ENCODE measurements at regions of chr1 and their contacts with region 1.

Region 1: DNA sequence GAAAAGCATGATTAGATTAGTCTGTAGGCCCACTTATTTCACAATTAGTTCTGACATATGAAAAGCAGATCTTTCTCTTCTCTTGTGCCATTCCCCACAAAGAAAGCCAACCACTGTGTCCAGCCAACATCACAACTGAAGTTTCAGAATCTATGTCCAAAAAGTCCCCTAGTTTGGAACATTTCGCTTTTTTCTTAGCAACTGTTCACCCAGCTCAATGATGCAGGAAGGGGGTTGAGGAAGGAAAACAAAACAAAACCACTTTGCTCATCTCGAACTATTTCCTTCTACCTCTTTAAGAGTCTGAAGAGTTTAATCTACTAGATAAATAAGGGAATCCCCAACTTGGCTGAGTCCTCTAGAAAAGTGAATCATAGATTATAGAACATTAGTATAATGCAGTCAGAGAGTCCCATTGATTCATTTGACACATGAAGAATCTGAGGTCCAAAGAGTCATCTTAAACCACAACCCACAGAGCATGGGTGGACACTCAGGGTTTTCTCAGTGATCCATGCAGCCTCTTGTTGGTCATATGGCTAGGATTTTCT is 159.3 kb upstream of the SGIP1 start:
- DNase-seq: peak; percentile 71
- H3K4me3 Mint-ChIP-seq: peak overlapping the region; percentile 64
- H3K27ac Mint-ChIP-seq: peak overlapping the region; percentile 99
- H3K4me1 Mint-ChIP-seq: peaks cover 76% of the 10 kb centered on the region
- H3K27me3 Mint-ChIP-seq: no peaks in the 10 kb centered on the region

Region 2: DNA sequence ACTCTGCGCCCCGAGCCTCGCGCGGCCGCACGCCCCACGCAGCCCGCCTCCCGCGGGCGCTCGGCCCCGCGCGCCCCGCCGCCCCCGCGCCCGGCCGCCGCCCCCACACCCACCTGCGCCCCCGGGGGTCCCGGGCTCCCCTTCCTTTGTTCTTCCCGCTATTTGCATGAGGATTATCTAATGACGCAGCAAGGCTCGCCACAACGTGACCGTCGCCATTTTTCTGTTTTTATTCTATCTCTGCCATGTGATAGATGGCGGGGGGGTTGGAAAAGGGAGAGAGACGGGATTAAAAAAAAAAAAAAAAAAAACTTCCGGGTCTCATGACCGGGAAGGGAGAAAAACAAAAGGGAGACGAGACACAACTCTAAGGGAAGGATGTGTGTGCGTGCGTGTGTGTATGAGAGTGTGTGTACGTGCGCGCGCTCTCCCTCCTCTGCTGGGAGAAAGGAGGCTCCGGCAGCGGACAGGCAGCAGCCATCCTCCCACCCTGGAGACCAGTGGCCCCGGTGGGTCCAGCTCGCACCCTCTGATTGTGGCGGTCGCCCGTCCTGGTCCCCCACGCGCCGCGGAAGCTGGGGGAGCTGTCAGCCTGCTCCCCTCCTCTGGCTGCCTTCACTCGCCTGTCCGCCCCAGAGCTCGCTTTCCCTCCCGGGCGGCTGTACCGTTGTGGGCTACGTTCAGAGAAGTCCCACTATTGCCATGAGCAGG is 1307.0 kb before region 1 on chr1:
- CTCF ChIA-PET with region 1: no interaction called
- POLR2A ChIA-PET with region 1: no interaction called
- intact Hi-C with region 1: loop called (anchors 10 kb)
- DNase-seq: peak; percentile 66
- H3K4me3 Mint-ChIP-seq: peak overlapping the region; percentile 87
- H3K27ac Mint-ChIP-seq: peak overlapping the region; percentile 93
- H3K4me1 Mint-ChIP-seq: peaks cover 53% of the 10 kb centered on the region
- H3K27me3 Mint-ChIP-seq: no peaks in the 10 kb centered on the region

Region 3: GRCh38 chr1:66253330-66253921 is 121.2 kb before region 1 on chr1:
- CTCF ChIA-PET with region 1: interaction called, 4 read pairs
- POLR2A ChIA-PET with region 1: interaction called, 11 read pairs
- intact Hi-C with region 1: loop called (anchors 1 kb)
- DNase-seq: no peak
- H3K4me3 Mint-ChIP-seq: no peak overlapping the region
- H3K27ac Mint-ChIP-seq: no peak overlapping the region
- H3K4me1 Mint-ChIP-seq: peaks cover 51% of the 10 kb centered on the region
- H3K27me3 Mint-ChIP-seq: no peaks in the 10 kb centered on the region

Region 4: DNA sequence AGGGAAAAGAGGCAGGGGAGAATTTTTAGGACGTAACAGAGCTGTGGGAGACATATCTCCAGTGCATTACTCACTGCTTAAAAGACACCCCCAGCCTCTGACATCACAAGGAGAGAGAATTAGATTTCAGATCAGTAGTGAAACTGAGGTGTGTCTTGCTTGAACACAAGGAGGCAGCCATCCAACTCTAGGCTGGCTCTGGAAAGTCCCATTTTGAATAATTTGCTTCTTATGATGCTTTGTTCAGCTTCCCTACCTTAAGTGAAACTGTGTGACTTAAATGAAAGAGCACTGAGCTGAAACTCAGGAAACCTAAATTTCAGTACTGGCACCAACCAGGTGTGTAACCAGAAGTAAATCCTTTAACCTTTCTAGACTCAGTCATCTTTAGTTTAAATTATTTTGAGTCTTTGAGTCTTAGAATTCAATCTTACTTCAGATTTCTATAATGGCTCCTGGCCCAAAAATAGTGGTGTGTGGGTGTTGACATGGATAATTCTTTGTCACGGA is 92.2 kb before region 1 on chr1:
- CTCF ChIA-PET with region 1: interaction called, 6 read pairs
- POLR2A ChIA-PET with region 1: interaction called, 13 read pairs
- intact Hi-C with region 1: loop called (anchors 1 kb)
- DNase-seq: peak; percentile 80
- H3K4me3 Mint-ChIP-seq: no peak overlapping the region
- H3K27ac Mint-ChIP-seq: peak overlapping the region; percentile 76
- H3K4me1 Mint-ChIP-seq: peaks cover 87% of the 10 kb centered on the region
- H3K27me3 Mint-ChIP-seq: no peaks in the 10 kb centered on the region

Region 5: DNA sequence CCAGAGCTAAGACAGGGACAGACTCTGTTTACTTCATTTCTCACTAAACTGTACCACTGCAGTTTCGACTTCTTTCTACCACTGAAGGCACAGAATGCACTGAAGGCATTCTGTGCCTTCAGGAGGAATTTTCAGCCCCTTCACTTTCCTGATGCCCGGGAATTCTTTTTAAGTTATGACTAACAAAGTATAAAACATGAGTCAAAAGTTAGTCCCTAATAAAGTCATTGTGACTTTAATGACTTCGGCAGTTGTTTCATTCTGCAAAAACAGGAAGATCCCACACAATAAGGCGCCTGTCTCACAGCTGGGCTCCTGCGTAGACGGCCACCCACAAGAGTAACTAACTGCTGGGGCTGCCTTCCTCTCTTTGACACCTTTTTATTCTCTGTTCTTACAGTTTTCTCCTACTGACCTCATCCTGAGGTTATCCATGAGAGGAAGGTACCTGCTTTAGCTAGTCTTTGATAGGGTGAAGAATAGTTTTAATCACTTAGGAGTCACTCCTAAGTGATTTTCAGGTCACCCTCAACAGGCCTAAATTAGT is 24.6 kb before region 1 on chr1:
- CTCF ChIA-PET with region 1: interaction called, 11 read pairs
- POLR2A ChIA-PET with region 1: interaction called, 28 read pairs
- intact Hi-C with region 1: loop called (anchors 1 kb)
- DNase-seq: peak; percentile 77
- H3K4me3 Mint-ChIP-seq: peak overlapping the region; percentile 65
- H3K27ac Mint-ChIP-seq: peak overlapping the region; percentile 83
- H3K4me1 Mint-ChIP-seq: peaks cover 93% of the 10 kb centered on the region
- H3K27me3 Mint-ChIP-seq: no peaks in the 10 kb centered on the region

Region 6: GRCh38 chr1:66436378-66437145 is 61.9 kb after region 1 on chr1:
- CTCF ChIA-PET with region 1: interaction called, 45 read pairs
- POLR2A ChIA-PET with region 1: interaction called, 14 read pairs
- intact Hi-C with region 1: loop called (anchors 1 kb)
- DNase-seq: peak; percentile 81
- H3K4me3 Mint-ChIP-seq: no peak overlapping the region
- H3K27ac Mint-ChIP-seq: peak overlapping the region; percentile 39
- H3K4me1 Mint-ChIP-seq: peaks cover 39% of the 10 kb centered on the region
- H3K27me3 Mint-ChIP-seq: no peaks in the 10 kb centered on the region

Measured in activated CD4-positive, alpha-beta memory T cell treated with anti-CD3 and anti-CD28 coated beads for 36 hours (primary cell).